SK-MEL-5 (cell line): ENCODE measurements at regions of chr11 and their contacts with region 1.

Region 1: GRCh38 chr11:22554221-22554620 is 71.4 kb downstream of the FANCF start:
- DNase-seq: no peak

Region 2: GRCh38 chr11:22491555-22492225 is 62.5 kb before region 1 on chr11:
- in situ Hi-C with region 1: no loop called
- DNase-seq: no peak

Region 3: DNA sequence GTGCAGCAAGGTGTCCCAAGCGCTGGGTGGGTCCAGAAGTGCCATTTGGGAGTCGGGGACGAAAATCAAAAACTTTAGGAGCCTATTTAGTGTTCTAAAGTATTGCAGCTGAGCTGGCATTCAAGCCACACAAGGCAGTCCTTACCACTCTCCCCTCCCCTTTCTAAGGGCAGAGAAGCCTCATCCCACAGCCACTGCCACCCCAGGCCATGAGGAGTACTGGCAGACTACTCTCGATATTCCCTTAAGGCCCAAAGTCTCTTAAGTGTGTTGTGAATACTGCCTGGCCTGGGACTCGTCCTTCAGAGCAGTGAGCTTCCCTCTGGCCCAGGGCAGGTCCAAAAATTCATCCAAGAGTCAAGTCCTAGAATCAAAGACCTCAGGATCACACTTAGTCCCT is 63.6 kb after region 1 on chr11:
- in situ Hi-C with region 1: no loop called
- DNase-seq: no peak

Region 4: GRCh38 chr11:22666688-22667439 is 112.6 kb after region 1 on chr11:
- in situ Hi-C with region 1: no loop called
- DNase-seq: peak; percentile 39

Region 5: DNA sequence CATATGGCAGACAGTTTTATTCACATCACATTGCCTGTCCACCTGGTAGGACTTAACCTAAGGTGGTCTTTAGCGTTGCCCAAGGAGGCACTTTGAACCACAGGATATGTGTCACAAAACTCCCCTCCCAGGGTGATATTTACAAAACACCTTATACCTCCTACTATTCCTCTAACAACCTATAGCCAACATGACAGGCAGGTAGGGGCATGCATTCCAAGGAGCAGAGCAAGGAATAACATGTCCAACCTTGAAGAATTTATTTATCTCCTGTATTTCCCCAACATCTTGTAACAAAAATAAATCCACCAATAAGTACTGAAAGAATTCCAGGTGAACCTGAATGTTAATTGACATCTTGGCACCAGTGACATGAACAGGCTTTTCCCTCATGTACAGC is 214.9 kb after region 1 on chr11:
- in situ Hi-C with region 1: no loop called
- DNase-seq: no peak

Region 6: GRCh38 chr11:22787551-22788162 is 233.4 kb after region 1 on chr11:
- in situ Hi-C with region 1: loop called (anchors 25 kb)
- DNase-seq: peak; percentile 73